ENCODE measurements at regions of chr13 and their contacts with region 1.

Region 1: GRCh38 chr13:72781451-72782439 is at the starts of genes DIS3 and PIBF1:
- DNase-seq: peak; percentile 98
- H3K4me3 Mint-ChIP-seq: peak within 1 kb of the TSS; percentile 95
- H3K27ac Mint-ChIP-seq: peak within 1 kb of the TSS; percentile 97
- H3K4me1 Mint-ChIP-seq: peaks cover 51% of the 10 kb centered on the region
- H3K27me3 Mint-ChIP-seq: no peaks in the 10 kb centered on the region
- total RNA-seq, gene DIS3: 45.0 and 48.6 TPM in 2 replicates
- total RNA-seq, gene PIBF1: 19.6 and 22.1 TPM in 2 replicates

Region 2: GRCh38 chr13:72643311-72643989 is 138.3 kb before region 1 on chr13:
- intact Hi-C with region 1: loop called (anchors 2 kb)
- DNase-seq: peak; percentile 10
- H3K4me3 Mint-ChIP-seq: no peak overlapping the region
- H3K27ac Mint-ChIP-seq: no peak overlapping the region
- H3K4me1 Mint-ChIP-seq: no peaks in the 10 kb centered on the region
- H3K27me3 Mint-ChIP-seq: peaks cover 7% of the 10 kb centered on the region

Region 3: GRCh38 chr13:72727417-72728289 is 54.1 kb before region 1 on chr13 and contains the starts of genes BORA and MZT1:
- intact Hi-C with region 1: loop called (anchors 1 kb)
- DNase-seq: peak; percentile 96
- H3K4me3 Mint-ChIP-seq: peak within 1 kb of the TSS; percentile 95
- H3K27ac Mint-ChIP-seq: peak within 1 kb of the TSS; percentile 87
- H3K4me1 Mint-ChIP-seq: peaks cover 49% of the 10 kb centered on the region
- H3K27me3 Mint-ChIP-seq: no peaks in the 10 kb centered on the region
- total RNA-seq, gene BORA: 18.3 and 18.4 TPM in 2 replicates
- total RNA-seq, gene MZT1: 20.9 and 21.1 TPM in 2 replicates

Region 4: GRCh38 chr13:72737033-72737432 is 44.7 kb before region 1 on chr13:
- intact Hi-C with region 1: loop called (anchors 5 kb)
- DNase-seq: no peak
- H3K4me3 Mint-ChIP-seq: no peak overlapping the region
- H3K27ac Mint-ChIP-seq: no peak overlapping the region
- H3K4me1 Mint-ChIP-seq: peaks cover 31% of the 10 kb centered on the region
- H3K27me3 Mint-ChIP-seq: no peaks in the 10 kb centered on the region

Region 5: GRCh38 chr13:73708393-73708985 is 926.7 kb after region 1 on chr13:
- intact Hi-C with region 1: loop called (anchors 2 kb)
- DNase-seq: peak; percentile 33
- H3K4me3 Mint-ChIP-seq: no peak overlapping the region
- H3K27ac Mint-ChIP-seq: no peak overlapping the region
- H3K4me1 Mint-ChIP-seq: peaks cover 16% of the 10 kb centered on the region
- H3K27me3 Mint-ChIP-seq: no peaks in the 10 kb centered on the region